ENCODE measurements at regions of chr4 and their contacts with region 1.

Region 1: GRCh38 chr4:105061136-105061696 is 85.5 kb upstream of the TET2 start:
- DNase-seq: peak; percentile 67
- H3K4me3 Mint-ChIP-seq: peak overlapping the region; percentile 30
- H3K27ac Mint-ChIP-seq: peak overlapping the region; percentile 82
- H3K4me1 Mint-ChIP-seq: peaks cover 54% of the 10 kb centered on the region
- H3K27me3 Mint-ChIP-seq: peaks cover 2% of the 10 kb centered on the region

Region 2: DNA sequence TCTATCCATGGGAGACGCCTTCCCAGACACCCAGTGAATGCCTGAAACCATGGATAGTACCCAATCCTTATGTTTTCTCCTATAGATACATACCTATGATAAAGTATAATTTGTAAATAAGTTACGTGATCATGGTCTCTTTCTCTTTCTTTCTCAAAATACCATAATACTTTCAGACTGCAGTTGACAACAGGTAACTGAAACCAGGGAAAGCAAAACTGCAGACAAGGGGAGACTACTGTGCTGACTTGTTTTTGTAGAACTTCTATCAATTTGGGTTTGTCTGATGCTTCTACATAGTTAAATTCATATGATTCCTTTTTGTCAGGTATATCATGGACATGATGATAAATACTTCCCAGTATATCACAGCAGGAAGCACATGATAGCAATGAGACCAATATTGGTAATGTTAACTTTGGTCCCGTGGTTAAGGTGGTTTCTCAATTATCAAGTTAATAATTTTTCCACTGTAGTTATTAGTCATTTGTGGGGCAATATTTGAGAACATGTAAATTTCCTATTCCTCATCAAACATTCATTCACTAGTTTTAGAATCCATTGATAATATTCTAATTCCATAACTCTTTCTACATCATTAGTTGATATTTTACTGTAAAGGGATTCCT is 212.5 kb before region 1 on chr4:
- CTCF ChIA-PET with region 1: no interaction called
- POLR2A ChIA-PET with region 1: no interaction called
- intact Hi-C with region 1: no loop called
- DNase-seq: no peak
- H3K4me3 Mint-ChIP-seq: no peak overlapping the region
- H3K27ac Mint-ChIP-seq: no peak overlapping the region
- H3K4me1 Mint-ChIP-seq: no peaks in the 10 kb centered on the region
- H3K27me3 Mint-ChIP-seq: no peaks in the 10 kb centered on the region

Region 3: DNA sequence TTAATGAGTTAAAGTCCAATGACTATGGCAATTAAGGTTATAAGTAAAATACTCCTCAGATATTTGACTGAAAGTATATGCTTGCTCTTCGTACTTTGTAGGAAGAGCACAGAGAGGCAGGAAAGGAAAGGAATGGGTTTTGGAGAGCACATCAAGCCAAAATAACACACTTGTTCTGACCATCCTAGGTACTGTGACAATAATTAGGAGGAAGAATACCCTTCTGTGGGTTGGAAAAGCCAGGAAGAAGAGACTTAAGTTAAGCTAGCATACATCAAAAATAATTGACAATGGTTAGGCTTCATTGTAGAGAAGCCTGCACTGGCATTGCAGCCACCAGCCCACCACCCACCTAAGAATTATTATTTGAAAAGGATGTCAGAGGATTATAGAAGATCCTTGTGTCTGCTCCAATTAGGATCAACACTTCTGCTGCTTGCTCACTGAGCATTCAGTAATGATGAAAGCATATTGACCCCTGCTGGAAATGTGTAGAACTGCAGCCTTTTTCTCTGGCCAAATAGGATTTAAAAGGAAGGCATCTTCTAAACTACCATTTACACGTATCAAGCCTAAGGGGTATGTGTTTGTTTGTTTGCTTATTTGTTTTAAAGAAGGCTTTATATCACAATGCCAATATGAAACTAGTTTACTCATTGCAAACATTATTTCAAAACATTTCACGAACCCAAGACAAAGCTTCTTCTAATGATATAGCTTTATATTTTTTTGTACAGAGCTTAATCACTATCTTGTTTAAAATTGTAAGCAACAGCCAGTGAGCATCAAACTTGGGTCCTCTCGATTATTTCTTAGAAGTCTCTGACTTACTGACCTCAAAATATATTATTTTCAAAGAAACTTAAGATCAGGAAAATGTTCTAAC is 200.7 kb before region 1 on chr4:
- CTCF ChIA-PET with region 1: no interaction called
- POLR2A ChIA-PET with region 1: no interaction called
- intact Hi-C with region 1: no loop called
- DNase-seq: peak; percentile 39
- H3K4me3 Mint-ChIP-seq: no peak overlapping the region
- H3K27ac Mint-ChIP-seq: no peak overlapping the region
- H3K4me1 Mint-ChIP-seq: no peaks in the 10 kb centered on the region
- H3K27me3 Mint-ChIP-seq: no peaks in the 10 kb centered on the region

Region 4: GRCh38 chr4:104896660-104897645 is 164.3 kb before region 1 on chr4:
- CTCF ChIA-PET with region 1: no interaction called
- POLR2A ChIA-PET with region 1: no interaction called
- intact Hi-C with region 1: loop called (anchors 2 kb)
- DNase-seq: no peak
- H3K4me3 Mint-ChIP-seq: no peak overlapping the region
- H3K27ac Mint-ChIP-seq: no peak overlapping the region
- H3K4me1 Mint-ChIP-seq: peaks cover 7% of the 10 kb centered on the region
- H3K27me3 Mint-ChIP-seq: no peaks in the 10 kb centered on the region

Region 5: DNA sequence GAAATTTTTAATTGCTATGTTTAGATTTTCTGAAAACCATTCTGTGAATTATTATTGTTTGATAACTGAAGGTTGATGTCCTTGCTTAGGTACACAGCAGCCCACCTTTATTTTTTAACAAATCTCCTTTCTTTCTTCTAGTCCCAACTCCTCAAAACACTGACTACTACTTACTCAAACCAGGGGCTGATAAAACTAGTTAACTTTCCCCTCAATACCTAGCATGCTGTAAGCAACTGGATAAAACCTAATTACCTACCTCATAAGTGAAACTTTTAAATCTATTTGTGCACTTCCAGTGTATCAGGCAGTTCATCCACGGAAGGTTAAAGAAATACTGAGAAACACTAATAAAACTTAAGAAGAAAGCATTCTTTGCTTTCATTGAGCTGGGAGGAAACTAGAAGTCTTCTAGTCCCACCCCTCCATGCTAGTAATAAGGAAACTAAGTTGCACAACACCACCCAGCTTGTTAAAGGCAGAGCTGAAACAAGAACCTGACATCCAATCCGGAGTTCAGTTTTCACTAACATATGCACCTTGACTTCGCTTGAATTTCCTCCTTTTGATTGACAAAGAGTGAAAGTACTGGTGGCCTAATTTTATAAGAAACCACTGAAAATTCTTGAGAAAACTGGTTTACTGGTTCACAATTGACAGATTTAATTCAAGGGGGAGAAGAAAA is 94.7 kb before region 1 on chr4:
- CTCF ChIA-PET with region 1: interaction called, 3 read pairs
- POLR2A ChIA-PET with region 1: interaction called, 3 read pairs
- intact Hi-C with region 1: loop called (anchors 1 kb)
- DNase-seq: peak; percentile 47
- H3K4me3 Mint-ChIP-seq: peak overlapping the region; percentile 48
- H3K27ac Mint-ChIP-seq: peak overlapping the region; percentile 79
- H3K4me1 Mint-ChIP-seq: peaks cover 15% of the 10 kb centered on the region
- H3K27me3 Mint-ChIP-seq: peaks cover 5% of the 10 kb centered on the region

Region 6: DNA sequence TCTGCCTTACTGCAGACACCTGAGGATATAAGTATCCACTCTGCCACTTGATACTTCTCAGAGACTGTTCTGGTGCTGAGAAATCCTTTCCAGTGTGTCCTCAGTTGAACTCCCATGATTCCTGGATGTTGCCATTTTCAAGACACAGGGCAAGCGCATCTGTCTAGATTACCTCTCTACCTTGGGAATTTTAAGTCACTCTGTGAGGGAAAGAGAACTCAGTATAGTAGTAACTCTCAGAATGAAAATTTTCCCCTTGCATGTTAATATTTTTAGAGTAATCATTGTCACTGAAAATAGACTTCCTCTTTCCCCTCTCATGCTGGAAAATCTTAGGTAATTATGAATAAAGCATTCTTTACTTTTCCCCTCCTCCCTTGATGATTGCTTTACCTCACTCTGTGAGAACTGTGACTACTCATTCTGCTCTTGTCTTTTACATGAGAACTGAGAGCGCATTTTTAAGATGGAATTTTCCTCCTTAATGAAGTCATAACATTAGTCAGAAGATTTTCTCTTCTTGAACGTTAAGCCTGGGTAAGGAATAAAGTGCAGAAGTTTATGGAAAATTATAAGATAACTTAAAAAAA is 130.5 kb after region 1 on chr4:
- CTCF ChIA-PET with region 1: no interaction called
- POLR2A ChIA-PET with region 1: interaction called, 3 read pairs
- intact Hi-C with region 1: loop called (anchors 2 kb)
- DNase-seq: no peak
- H3K4me3 Mint-ChIP-seq: no peak overlapping the region
- H3K27ac Mint-ChIP-seq: peak overlapping the region; percentile 83
- H3K4me1 Mint-ChIP-seq: peaks cover 87% of the 10 kb centered on the region
- H3K27me3 Mint-ChIP-seq: no peaks in the 10 kb centered on the region

Region 7: GRCh38 chr4:105453550-105454205 is 392.5 kb after region 1 on chr4:
- CTCF ChIA-PET with region 1: no interaction called
- POLR2A ChIA-PET with region 1: no interaction called
- intact Hi-C with region 1: loop called (anchors 1 kb)
- DNase-seq: peak; percentile 51
- H3K4me3 Mint-ChIP-seq: no peak overlapping the region
- H3K27ac Mint-ChIP-seq: peak overlapping the region; percentile 69
- H3K4me1 Mint-ChIP-seq: peaks cover 38% of the 10 kb centered on the region
- H3K27me3 Mint-ChIP-seq: no peaks in the 10 kb centered on the region

Region 8: GRCh38 chr4:105708530-105709391 is 647.5 kb after region 1 on chr4 and contains the starts of genes GSTCD and INTS12:
- CTCF ChIA-PET with region 1: no interaction called
- POLR2A ChIA-PET with region 1: no interaction called
- intact Hi-C with region 1: loop called (anchors 2 kb)
- DNase-seq: peak; percentile 93
- H3K4me3 Mint-ChIP-seq: peak within 1 kb of the TSS; percentile 98
- H3K27ac Mint-ChIP-seq: peak within 1 kb of the TSS; percentile 86
- H3K4me1 Mint-ChIP-seq: peaks cover 27% of the 10 kb centered on the region
- H3K27me3 Mint-ChIP-seq: no peaks in the 10 kb centered on the region
- total RNA-seq, gene GSTCD: 15.2 to 16.7 TPM
- total RNA-seq, gene INTS12: 19.6 to 22.7 TPM

Measured in activated CD4-positive, alpha-beta memory T cell treated with anti-CD3 and anti-CD28 coated beads for 36 hours (primary cell).